A673 (cell line): ENCODE measurements at regions of chr15 and their contacts with region 1.

Region 1: GRCh38 chr15:46312133-46312740 is 677.4 kb downstream of the SQOR start:
- DNase-seq: peak; percentile 77
- H3K4me3 ChIP-seq: no peak overlapping the region
- H3K27ac ChIP-seq: no peak overlapping the region
- H3K4me1 ChIP-seq: no peaks in the 10 kb centered on the region
- H3K27me3 ChIP-seq: no peaks in the 10 kb centered on the region
- CTCF ChIP-seq: peak; percentile 93

Region 2: GRCh38 chr15:45795440-45796069 is 516.7 kb before region 1 on chr15:
- CTCF ChIA-PET with region 1: no interaction called
- POLR2A ChIA-PET with region 1: no interaction called
- intact Hi-C with region 1: loop called (anchors 5 kb)
- DNase-seq: peak; percentile 62
- H3K4me3 ChIP-seq: no peak overlapping the region
- H3K27ac ChIP-seq: no peak overlapping the region
- H3K4me1 ChIP-seq: no peaks in the 10 kb centered on the region
- H3K27me3 ChIP-seq: no peaks in the 10 kb centered on the region
- CTCF ChIP-seq: peak; percentile 80

Region 3: GRCh38 chr15:46502668-46503067 is 190.4 kb after region 1 on chr15:
- CTCF ChIA-PET with region 1: interaction called, 8 read pairs
- POLR2A ChIA-PET with region 1: no interaction called
- intact Hi-C with region 1: loop called (anchors 2 kb)
- DNase-seq: peak; percentile 40
- H3K4me3 ChIP-seq: no peak overlapping the region
- H3K27ac ChIP-seq: no peak overlapping the region
- H3K4me1 ChIP-seq: no peaks in the 10 kb centered on the region
- H3K27me3 ChIP-seq: no peaks in the 10 kb centered on the region
- CTCF ChIP-seq: peak; percentile 62

Region 4: GRCh38 chr15:47184003-47184907 is 872.0 kb after region 1 on chr15:
- CTCF ChIA-PET with region 1: no interaction called
- POLR2A ChIA-PET with region 1: no interaction called
- intact Hi-C with region 1: loop called (anchors 5 kb)
- DNase-seq: peak; percentile 75
- H3K4me3 ChIP-seq: peak overlapping the region; percentile 82
- H3K27ac ChIP-seq: peak overlapping the region; percentile 72
- H3K4me1 ChIP-seq: peaks cover 23% of the 10 kb centered on the region
- H3K27me3 ChIP-seq: no peaks in the 10 kb centered on the region
- CTCF ChIP-seq: no peak

Region 5: GRCh38 chr15:47688573-47689086 is 1376.4 kb after region 1 on chr15:
- CTCF ChIA-PET with region 1: no interaction called
- POLR2A ChIA-PET with region 1: no interaction called
- intact Hi-C with region 1: no loop called
- DNase-seq: peak; percentile 61
- H3K4me3 ChIP-seq: no peak overlapping the region
- H3K27ac ChIP-seq: peak overlapping the region; percentile 83
- H3K4me1 ChIP-seq: peaks cover 27% of the 10 kb centered on the region
- H3K27me3 ChIP-seq: no peaks in the 10 kb centered on the region
- CTCF ChIP-seq: no peak